MCF 10A (cell line): ENCODE measurements at regions of chr20 and their contacts with region 1.

Region 1: GRCh38 chr20:60050158-60050947 is 92.1 kb downstream of the CDH26 start:
- DNase-seq: peak; percentile 64
- H3K4me3 Mint-ChIP-seq: no peak overlapping the region
- H3K27ac Mint-ChIP-seq: no peak overlapping the region
- H3K4me1 Mint-ChIP-seq: peaks cover 14% of the 10 kb centered on the region
- H3K27me3 Mint-ChIP-seq: no peaks in the 10 kb centered on the region
- CTCF ChIP-seq: peak; percentile 47

Region 2: DNA sequence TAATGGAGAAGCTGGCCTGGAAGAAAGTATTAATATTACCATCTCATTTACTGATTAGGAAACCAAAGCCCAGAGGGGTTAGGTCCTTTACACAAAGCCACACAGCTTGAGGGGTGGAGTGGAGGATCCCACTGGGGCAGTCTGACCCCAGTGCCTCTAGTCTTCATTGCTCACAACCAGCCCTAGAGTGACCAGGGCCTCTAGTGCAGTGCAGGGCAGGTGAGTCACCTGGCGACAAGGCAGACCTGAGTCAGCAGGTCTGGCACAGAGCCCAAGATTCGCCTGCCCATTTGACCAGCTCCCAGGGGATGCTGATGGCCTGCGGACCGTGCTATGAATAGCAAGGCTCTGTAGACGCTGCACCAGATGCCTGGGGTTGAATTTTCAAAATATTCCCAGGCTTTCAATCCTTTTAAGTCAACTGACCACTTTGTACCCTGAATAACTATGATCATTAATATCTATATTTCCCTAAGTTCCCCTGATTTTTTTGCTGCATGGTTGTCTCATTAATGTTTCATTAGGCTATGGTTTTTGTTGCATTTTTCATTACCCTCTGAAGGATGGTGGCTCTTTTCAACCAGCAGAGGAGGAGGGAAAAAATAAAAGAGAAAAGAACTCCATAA is 62.1 kb before region 1 on chr20:
- CTCF ChIA-PET with region 1: interaction called, 10 read pairs
- POLR2A ChIA-PET with region 1: interaction called, 3 read pairs
- intact Hi-C with region 1: loop called (anchors 1 kb)
- DNase-seq: peak; percentile 86
- H3K4me3 Mint-ChIP-seq: no peak overlapping the region
- H3K27ac Mint-ChIP-seq: no peak overlapping the region
- H3K4me1 Mint-ChIP-seq: peaks cover 13% of the 10 kb centered on the region
- H3K27me3 Mint-ChIP-seq: no peaks in the 10 kb centered on the region
- CTCF ChIP-seq: no peak